ENCODE measurements at regions of chr2 and their contacts with region 1.

Region 1: GRCh38 chr2:106638043-106638442 is 150.9 kb downstream of the CD8B2 start:
- DNase-seq: no peak
- ATAC-seq: no peak
- H3K4me3 ChIP-seq: no peak overlapping the region
- H3K27ac ChIP-seq: no peak overlapping the region
- H3K4me1 ChIP-seq: no peaks in the 10 kb centered on the region
- H3K27me3 ChIP-seq: no peaks in the 10 kb centered on the region
- CTCF ChIP-seq: peak in 10 of 12 donors; percentile 15 to 61 (median 52)
- POLR2A ChIP-seq: no peak

Region 2: DNA sequence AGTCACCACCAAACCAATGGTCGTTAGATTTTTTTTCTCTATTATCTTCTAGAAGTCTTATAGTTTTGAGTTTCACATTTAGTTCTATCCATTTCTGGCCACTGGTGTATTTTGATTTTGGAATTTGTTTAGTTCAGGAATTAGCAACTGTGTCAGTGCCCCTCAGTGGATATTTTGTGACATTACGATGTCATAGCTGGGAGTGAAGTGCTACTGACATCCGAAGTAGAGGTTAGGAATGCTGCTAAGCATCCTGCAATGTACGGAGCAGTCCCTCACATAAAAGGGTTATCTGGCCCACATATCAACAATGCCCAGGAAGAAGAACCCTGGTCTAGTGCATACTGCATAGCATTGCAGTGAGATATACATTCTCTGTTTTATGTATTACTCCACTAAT is 1031.3 kb after region 1 on chr2:
- intact Hi-C with region 1: loop called in 2 of 10 experiments (anchors 5 to 10 kb)
- DNase-seq: no peak
- ATAC-seq: peak in 2 of 4 donors; percentile 31 to 54
- H3K4me3 ChIP-seq: no peak overlapping the region
- H3K27ac ChIP-seq: no peak overlapping the region
- H3K4me1 ChIP-seq: no peaks in the 10 kb centered on the region
- H3K27me3 ChIP-seq: no peaks in the 10 kb centered on the region
- CTCF ChIP-seq: peak in 10 of 12 donors; percentile 9 to 51 (median 38)
- POLR2A ChIP-seq: no peak

Region 3: DNA sequence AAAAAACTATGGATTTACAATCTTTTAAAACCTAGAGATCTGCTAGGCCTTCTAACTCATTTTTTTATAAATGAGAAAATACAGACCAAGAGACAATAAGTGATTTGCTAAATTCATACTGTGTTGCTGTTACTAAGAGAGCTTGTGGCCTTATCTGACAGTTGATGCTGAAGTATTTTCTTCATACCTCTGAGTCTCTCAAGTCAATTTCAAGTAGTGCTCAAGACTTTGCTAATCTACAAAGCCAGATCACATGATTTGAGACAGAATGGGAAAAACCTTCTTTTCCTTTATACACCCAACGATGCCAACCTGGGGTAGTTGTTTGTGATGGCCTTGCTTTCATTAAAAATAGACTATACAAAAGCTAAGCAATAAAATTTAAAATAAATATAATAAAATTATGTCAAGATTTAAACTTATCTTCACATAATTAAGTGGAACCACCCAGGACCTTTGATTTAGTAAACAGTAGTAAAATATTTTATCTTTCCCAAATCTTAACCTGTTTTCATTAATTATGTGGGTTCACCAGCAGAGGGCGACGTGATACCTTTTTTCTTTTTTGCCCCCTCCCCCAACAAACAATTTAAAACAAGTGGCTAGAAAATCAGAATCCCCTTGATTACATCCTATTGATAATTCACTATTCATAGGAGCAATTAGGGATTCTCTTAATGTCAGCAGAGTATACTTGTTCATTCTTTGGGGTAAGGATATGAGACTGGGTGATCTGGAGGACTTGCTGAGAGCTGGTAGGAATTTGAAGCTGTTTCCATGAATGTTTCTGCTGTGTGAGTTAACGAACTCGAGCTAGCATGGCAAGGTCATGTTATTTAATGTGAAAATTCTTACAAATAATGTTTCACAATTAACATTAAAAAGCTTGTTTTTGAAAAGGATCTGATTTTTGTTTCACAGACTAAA is 1298.7 kb after region 1 on chr2:
- intact Hi-C with region 1: loop called in 8 of 10 experiments (anchors 5 to 10 kb)
- DNase-seq: no peak
- ATAC-seq: no peak
- H3K4me3 ChIP-seq: no peak overlapping the region
- H3K27ac ChIP-seq: no peak overlapping the region
- H3K4me1 ChIP-seq: no peaks in the 10 kb centered on the region
- H3K27me3 ChIP-seq: peaks cover 0 to 20% (median 0%) of the 10 kb centered on the region in 9 donors
- CTCF ChIP-seq: peak; percentile 19 to 55 (median 40)
- POLR2A ChIP-seq: no peak

Region 4: GRCh38 chr2:108169982-108170625 is 1532.1 kb after region 1 on chr2:
- intact Hi-C with region 1: loop called in 1 of 10 experiments (anchors 10 kb)
- DNase-seq: no peak
- ATAC-seq: no peak
- H3K4me3 ChIP-seq: no peak overlapping the region
- H3K27ac ChIP-seq: no peak overlapping the region
- H3K4me1 ChIP-seq: no peaks in the 10 kb centered on the region
- H3K27me3 ChIP-seq: peaks cover 0 to 14% (median 0%) of the 10 kb centered on the region in 9 donors
- CTCF ChIP-seq: peak in 10 of 12 donors; percentile 22 to 58 (median 34)
- POLR2A ChIP-seq: no peak

Region 5: GRCh38 chr2:108184419-108184818 is 1546.4 kb after region 1 on chr2:
- intact Hi-C with region 1: loop called in 3 of 10 experiments (anchors 5 to 10 kb)
- DNase-seq: no peak
- ATAC-seq: no peak
- H3K4me3 ChIP-seq: no peak overlapping the region
- H3K27ac ChIP-seq: no peak overlapping the region
- H3K4me1 ChIP-seq: no peaks in the 10 kb centered on the region
- H3K27me3 ChIP-seq: no peaks in the 10 kb centered on the region
- CTCF ChIP-seq: peak in 5 of 12 donors; percentile 8 to 35 (median 25)
- POLR2A ChIP-seq: no peak

Region 6: GRCh38 chr2:108194409-108195132 is 1556.5 kb after region 1 on chr2:
- intact Hi-C with region 1: loop called in 2 of 10 experiments (anchors 10 kb)
- DNase-seq: no peak
- ATAC-seq: no peak
- H3K4me3 ChIP-seq: no peak overlapping the region
- H3K27ac ChIP-seq: no peak overlapping the region
- H3K4me1 ChIP-seq: no peaks in the 10 kb centered on the region
- H3K27me3 ChIP-seq: no peaks in the 10 kb centered on the region
- CTCF ChIP-seq: peak; percentile 21 to 70 (median 42)
- POLR2A ChIP-seq: no peak